ENCODE measurements at regions of chr7 and their contacts with region 1.

Region 1: DNA sequence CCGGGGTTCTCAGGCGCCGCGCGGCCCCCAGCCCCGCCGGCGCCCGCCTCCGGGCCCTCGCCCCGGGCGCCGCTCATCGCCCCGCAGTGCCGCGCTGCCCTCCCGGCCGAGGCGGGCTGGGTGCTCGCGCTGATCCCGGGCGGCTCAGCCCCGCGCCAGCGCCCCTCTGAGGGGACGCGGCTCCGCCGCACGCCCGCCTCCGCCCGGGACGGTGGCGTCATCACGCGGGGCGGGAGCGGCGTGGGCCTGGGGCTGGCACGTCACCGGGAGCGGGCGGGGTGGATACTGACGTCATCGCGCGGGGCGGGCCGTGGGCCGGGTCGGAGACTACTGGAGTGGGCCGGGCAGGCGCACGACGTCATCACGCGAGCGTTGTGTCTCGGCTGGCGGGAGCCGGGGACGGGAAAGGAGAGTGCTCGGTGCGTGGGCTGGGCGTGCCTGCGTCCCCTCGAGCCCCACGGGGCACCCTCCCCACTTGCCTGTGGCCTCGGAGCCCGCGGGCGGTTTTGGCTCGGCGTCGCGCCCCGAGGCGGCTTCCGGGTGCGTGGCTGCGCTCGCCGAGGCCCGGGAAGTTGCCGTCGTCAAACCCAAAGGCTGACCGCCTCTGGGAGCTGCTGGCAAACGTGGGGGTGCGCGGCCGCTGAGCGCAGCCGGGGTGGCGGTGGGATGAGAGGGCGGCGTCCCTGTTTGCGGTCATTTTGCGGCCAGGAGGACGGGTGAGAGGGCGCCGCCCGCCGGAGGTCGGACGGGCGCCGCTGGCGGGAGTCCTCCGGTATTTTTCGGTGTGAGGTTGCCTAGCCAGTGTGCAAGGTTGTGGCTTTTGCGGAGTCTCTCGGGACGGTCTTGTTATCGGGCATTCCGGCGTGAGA is at the start of gene ESYT2:
- DNase-seq: peak; percentile 96
- H3K4me3 ChIP-seq: peak within 1 kb of the TSS; percentile 87
- H3K27ac ChIP-seq: peak within 1 kb of the TSS; percentile 54
- H3K4me1 ChIP-seq: peaks cover 16% of the 10 kb centered on the region
- CTCF ChIP-seq: peak; percentile 43
- total RNA-seq, gene ESYT2: 30.5 and 33.7 TPM in 2 replicates

Region 2: DNA sequence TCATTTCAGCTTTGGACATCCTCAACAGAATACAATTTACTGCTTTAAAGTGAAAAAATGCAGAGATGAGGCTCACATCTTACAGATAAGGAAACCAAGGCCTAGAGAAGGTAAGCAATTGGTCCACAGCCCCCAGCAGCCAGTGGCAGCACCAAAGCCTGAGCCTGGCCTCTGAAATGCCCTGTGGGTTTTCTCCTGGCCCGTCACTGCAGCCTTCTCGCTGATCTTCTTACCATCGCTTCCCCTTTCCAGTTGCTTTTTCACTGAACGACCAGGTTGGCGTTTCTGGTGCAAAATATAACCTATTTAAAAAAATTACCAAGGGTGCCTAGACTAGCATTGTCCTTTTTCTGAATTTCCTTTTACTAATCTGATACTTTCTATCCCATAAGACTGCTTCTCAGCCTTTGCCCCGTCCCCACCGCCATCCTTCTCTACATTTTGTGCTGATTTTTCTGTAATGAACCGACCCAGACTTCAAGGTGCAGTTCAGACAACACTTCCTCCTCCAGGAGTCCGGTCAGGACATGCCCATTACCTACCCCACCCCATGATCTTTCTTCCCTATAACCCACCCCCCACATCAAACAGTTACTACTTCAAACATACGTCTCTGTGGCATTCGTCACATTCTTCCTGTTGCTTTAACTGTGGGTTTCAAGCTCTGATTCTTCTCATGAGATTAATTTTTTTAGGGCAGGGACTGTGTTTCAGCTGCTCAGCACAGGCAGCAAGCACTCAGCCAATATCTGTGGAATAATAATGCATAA is 1203.4 kb before region 1 on chr7:
- CTCF ChIA-PET with region 1: no interaction called
- POLR2A ChIA-PET with region 1: no interaction called
- intact Hi-C with region 1: no loop called
- DNase-seq: no peak
- H3K4me3 ChIP-seq: no peak overlapping the region
- H3K27ac ChIP-seq: no peak overlapping the region
- H3K4me1 ChIP-seq: no peaks in the 10 kb centered on the region
- CTCF ChIP-seq: no peak

Region 3: DNA sequence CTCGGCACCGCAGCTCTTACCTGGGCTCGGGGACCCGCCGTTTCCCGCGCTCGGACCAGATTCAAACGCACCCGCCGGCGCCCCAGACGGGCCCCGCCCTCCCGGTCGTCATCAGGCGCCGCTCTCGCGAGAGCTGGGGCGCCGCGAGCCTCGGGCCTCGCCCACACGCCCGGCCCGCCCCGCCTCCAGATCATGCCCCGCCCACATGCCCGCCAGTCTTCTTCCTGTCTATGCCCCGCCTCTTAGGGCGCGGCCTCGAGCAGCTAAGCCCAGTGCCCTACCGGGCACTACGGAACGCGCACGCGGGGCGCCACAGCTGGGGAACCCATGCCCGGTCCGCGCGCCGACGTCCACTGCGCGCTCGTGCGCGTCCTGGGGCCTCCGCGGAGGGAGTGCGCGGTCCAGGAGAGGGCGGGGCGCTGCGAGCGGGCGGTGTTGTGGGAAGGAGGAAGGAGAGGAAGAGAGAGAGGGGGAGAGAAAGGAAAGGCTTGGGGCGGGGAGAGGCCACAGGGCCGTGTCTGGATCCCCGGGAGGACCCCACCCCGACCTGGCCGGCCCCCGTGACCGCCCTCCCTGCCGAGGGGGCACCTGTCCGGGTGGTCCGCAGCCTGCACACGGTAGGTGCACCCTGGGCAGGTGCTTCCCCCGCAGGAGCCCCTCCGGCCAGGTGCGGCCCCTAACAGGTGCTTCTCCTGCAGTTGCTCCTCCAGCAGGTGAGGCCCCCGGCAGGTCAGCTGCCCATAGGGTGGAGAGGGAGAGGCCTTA is 124.7 kb before region 1 on chr7 and contains the start of gene NCAPG2:
- CTCF ChIA-PET with region 1: no interaction called
- POLR2A ChIA-PET with region 1: no interaction called
- intact Hi-C with region 1: loop called (anchors 1 kb)
- DNase-seq: peak; percentile 97
- H3K4me3 ChIP-seq: peak within 1 kb of the TSS; percentile 77
- H3K27ac ChIP-seq: peak within 1 kb of the TSS; percentile 48
- H3K4me1 ChIP-seq: peaks cover 19% of the 10 kb centered on the region
- CTCF ChIP-seq: no peak
- total RNA-seq, gene NCAPG2: 61.8 and 67.9 TPM in 2 replicates

Region 4: GRCh38 chr7:158760936-158761335 is 68.6 kb before region 1 on chr7:
- CTCF ChIA-PET with region 1: no interaction called
- POLR2A ChIA-PET with region 1: no interaction called
- intact Hi-C with region 1: no loop called
- DNase-seq: no peak
- H3K4me3 ChIP-seq: no peak overlapping the region
- H3K27ac ChIP-seq: no peak overlapping the region
- H3K4me1 ChIP-seq: no peaks in the 10 kb centered on the region
- CTCF ChIP-seq: peak; percentile 54; the same call in 1 of the 2 replicates

Measured in OCI-LY7 (cell line).